ENCODE measurements at regions of chr1 and their contacts with region 1.

Region 1: DNA sequence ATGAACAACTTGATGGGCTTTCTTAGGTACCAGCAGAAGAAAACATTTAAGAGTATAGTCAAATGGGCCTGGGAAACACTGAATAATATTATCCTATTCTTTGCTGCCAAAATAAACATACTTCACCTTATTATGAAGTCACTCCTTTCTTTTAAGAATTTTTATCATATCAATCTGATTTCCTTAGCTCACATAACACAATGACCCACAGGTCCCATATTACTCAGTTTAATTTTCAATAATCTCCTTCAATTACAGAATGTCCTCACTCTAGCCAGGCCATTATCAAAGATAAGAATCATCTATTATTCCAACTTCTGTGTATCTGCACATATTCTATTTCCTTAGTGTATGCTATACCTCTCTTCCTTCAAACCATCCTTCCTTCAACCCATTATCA is 63.0 kb downstream of the PIGK start:
- DNase-seq: no peak
- H3K4me3 ChIP-seq: no peak overlapping the region
- H3K27ac ChIP-seq: no peak overlapping the region
- H3K4me1 ChIP-seq: no peaks in the 10 kb centered on the region
- H3K27me3 ChIP-seq: no peaks in the 10 kb centered on the region
- CTCF ChIP-seq: no peak
- POLR2A ChIP-seq: no peak

Region 2: GRCh38 chr1:77533660-77534305 is 377.6 kb after region 1 on chr1:
- intact Hi-C with region 1: loop called (anchors 5 kb)
- DNase-seq: peak; percentile 44
- H3K4me3 ChIP-seq: no peak overlapping the region
- H3K27ac ChIP-seq: no peak overlapping the region
- H3K4me1 ChIP-seq: no peaks in the 10 kb centered on the region
- H3K27me3 ChIP-seq: no peaks in the 10 kb centered on the region
- CTCF ChIP-seq: peak; percentile 64 to 82 (median 74)
- POLR2A ChIP-seq: no peak

Region 3: DNA sequence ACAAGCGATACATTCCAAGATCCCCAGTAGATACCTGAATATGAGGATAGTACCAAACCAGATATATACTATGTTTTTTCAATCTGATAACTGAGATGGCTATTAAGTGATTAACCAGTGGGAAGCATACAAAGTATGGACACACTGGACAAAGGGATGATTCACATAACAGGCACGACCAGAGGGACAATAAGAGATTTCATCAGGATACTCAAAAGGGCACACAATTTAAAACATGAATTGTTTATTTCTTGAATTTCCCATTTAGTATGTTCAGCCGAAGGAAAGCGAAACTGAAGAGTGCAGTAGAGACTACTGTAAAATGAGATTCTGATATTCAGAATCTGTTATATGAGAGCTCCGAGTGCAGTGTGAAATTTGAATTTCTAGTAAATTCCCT is 515.6 kb after region 1 on chr1:
- intact Hi-C with region 1: loop called (anchors 10 kb)
- DNase-seq: no peak
- H3K4me3 ChIP-seq: no peak overlapping the region
- H3K27ac ChIP-seq: no peak overlapping the region
- H3K4me1 ChIP-seq: no peaks in the 10 kb centered on the region
- H3K27me3 ChIP-seq: no peaks in the 10 kb centered on the region
- CTCF ChIP-seq: no peak
- POLR2A ChIP-seq: no peak

Region 4: DNA sequence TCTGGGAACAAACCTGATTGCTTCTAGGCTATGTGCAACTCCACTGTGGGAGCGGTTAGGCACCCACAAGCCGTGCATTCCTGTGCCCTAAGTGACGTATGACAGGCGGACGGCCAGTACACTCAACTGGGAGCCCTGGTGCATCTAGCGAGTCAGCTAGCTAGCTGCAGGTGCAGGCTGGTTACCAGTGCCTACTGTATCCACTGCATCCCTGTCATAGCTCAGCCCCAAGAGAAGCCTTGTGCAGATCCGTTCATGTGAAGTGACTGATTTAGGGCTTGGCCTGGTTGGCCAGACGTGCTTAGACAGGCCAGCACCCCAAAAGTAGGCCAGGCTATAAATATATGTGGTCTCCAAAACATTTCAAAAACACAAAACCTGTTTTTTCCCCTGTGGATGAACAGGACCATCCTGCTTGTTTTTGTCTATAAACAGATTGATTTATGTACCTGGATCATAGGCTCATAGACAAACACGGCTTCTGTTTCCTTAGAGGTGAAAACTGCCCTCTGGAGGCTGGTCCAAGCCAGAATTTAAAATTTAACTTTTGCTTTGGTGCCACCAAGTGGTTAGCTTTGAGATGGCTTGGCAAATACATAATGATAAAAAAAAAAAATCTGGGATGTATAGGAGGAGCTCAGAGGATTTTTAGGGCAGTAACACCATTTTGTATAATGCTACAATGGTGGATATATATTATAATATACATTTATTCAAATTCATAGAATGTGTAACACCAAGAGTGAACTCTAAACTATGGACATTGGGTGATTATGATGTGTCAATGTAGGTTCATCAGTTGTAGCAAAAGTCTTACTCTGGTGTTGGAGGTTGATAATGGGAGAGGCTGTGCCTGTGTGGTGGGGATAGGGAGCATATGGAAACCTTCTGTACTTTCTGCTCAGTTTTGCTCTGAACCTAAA is 958.1 kb after region 1 on chr1:
- intact Hi-C with region 1: loop called (anchors 10 kb)
- DNase-seq: peak; percentile 67
- H3K4me3 ChIP-seq: no peak overlapping the region
- H3K27ac ChIP-seq: no peak overlapping the region
- H3K4me1 ChIP-seq: no peaks in the 10 kb centered on the region
- H3K27me3 ChIP-seq: no peaks in the 10 kb centered on the region
- CTCF ChIP-seq: peak; percentile 63 to 91 (median 86)
- POLR2A ChIP-seq: no peak